ENCODE measurements at regions of chr4 and their contacts with region 1.

Region 1: DNA sequence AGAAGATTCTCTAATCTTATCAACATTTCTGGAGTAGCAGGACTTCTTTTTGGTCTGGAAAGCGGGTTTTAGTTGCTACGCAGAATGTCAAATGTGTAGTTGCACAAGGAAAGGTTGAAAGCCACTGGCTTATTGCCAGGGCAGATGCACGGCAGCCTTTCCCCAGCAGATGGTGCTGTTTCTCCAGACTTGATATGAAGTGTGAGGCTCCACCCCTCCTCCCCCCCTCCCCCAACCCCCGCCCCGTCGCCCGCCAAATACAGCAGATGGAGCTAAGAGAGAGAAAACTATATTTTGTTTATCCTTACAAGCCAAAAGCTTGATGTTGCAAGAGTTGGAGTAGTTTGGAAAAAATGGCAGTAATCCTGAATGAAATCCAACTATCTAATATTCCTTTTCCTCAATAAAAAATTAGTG is 32.0 kb downstream of the ENOPH1 start:
- DNase-seq: peak; percentile 76 to 94 (median 84)
- ATAC-seq: peak; percentile 75 to 98 (median 94)
- H3K4me3 ChIP-seq: no peak overlapping the region
- H3K27ac ChIP-seq: no peak overlapping the region
- H3K4me1 ChIP-seq: no peaks in the 10 kb centered on the region
- H3K27me3 ChIP-seq: no peaks in the 10 kb centered on the region
- CTCF ChIP-seq: peak; percentile 73 to 79 (median 76)

Region 2: DNA sequence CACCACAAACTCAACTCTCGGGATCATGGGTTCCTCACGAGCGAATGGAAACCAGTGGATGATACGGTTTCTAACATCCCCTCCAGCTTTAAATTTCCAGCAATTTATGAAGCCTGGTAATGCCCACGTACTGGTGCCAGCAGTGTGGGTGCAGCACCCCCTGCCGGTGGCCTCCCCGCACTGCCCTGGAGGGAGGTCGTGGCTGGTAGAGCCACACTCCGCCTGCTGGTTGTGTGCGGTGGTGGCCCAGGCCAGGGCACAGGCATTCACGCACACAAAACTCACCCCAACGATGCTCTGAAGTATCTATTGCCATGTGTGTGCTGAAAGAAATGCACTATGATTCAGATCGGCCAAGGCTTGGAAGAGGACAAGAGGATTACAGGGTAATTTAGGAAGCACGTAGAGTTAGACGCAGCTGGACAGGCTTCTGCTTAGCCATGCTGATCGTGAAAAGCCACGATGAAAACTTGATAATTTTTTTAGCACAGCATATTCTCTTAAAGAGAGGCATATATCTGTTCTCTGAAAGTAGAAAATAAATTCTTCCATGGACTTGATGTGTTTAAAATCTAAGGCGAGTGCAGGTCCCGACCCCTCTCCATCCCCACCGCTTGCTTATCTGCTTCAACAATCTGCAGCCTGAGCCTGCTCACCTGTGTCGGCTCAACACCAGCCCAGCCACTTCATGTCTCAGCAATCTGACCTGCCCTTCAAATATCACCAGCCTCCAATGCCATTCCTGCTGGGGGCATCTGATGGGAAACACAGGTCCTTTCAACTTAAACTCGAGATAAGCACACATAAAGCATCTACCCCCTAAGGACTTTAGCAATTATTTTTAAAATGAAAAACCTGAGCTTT is 277.1 kb after region 1 on chr4:
- intact Hi-C with region 1: loop called in 2 of 3 experiments (anchors 5 to 10 kb)
- DNase-seq: peak; percentile 65 to 93 (median 83)
- ATAC-seq: peak; percentile 88 to 99 (median 93)
- H3K4me3 ChIP-seq: no peak overlapping the region
- H3K27ac ChIP-seq: no peak overlapping the region
- H3K4me1 ChIP-seq: peaks cover 2 to 12% (median 8%) of the 10 kb centered on the region in 3 donors
- H3K27me3 ChIP-seq: no peaks in the 10 kb centered on the region
- CTCF ChIP-seq: peak; percentile 88 to 98 (median 94)